ENCODE measurements at regions of chr3 and their contacts with region 1.

Region 1: GRCh38 chr3:119559441-119559963 is at the start of gene CD80:
- DNase-seq: peak; percentile 54
- H3K4me3 Mint-ChIP-seq: peak within 1 kb of the TSS; percentile 55
- H3K27ac Mint-ChIP-seq: peak within 1 kb of the TSS; percentile 67
- H3K4me1 Mint-ChIP-seq: peaks cover 45% of the 10 kb centered on the region
- H3K27me3 Mint-ChIP-seq: no peaks in the 10 kb centered on the region
- total RNA-seq, gene CD80: 6.8 TPM in 2 replicates

Region 2: DNA sequence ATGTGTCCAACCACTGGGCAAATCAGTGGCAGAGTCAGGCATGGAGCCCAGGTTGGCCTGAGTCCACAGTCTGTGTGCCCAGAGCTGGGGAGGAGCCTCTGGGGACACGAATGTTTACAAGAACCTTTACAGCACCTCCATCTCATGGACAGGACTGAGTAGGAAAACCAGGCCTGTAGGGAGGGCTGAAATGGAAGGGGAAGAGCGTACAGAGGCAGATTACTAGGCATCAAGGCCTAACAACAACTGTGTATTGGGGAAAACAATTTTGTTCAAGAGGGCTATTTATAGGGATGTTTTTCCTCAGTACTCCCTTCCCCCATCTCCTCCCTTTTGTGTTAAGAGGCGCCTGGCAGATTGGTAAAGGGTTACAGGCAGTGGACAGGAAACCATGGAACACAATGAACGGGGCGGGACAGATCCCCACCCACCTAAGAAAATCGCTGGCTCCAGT is 280.4 kb before region 1 on chr3:
- intact Hi-C with region 1: loop called (anchors 5 kb)
- DNase-seq: no peak
- H3K4me3 Mint-ChIP-seq: no peak overlapping the region
- H3K27ac Mint-ChIP-seq: no peak overlapping the region
- H3K4me1 Mint-ChIP-seq: peaks cover 7% of the 10 kb centered on the region
- H3K27me3 Mint-ChIP-seq: peaks cover 1% of the 10 kb centered on the region

Region 3: GRCh38 chr3:119380697-119381096 is 178.8 kb before region 1 on chr3:
- intact Hi-C with region 1: loop called (anchors 5 kb)
- DNase-seq: no peak
- H3K4me3 Mint-ChIP-seq: no peak overlapping the region
- H3K27ac Mint-ChIP-seq: no peak overlapping the region
- H3K4me1 Mint-ChIP-seq: no peaks in the 10 kb centered on the region
- H3K27me3 Mint-ChIP-seq: no peaks in the 10 kb centered on the region

Region 4: DNA sequence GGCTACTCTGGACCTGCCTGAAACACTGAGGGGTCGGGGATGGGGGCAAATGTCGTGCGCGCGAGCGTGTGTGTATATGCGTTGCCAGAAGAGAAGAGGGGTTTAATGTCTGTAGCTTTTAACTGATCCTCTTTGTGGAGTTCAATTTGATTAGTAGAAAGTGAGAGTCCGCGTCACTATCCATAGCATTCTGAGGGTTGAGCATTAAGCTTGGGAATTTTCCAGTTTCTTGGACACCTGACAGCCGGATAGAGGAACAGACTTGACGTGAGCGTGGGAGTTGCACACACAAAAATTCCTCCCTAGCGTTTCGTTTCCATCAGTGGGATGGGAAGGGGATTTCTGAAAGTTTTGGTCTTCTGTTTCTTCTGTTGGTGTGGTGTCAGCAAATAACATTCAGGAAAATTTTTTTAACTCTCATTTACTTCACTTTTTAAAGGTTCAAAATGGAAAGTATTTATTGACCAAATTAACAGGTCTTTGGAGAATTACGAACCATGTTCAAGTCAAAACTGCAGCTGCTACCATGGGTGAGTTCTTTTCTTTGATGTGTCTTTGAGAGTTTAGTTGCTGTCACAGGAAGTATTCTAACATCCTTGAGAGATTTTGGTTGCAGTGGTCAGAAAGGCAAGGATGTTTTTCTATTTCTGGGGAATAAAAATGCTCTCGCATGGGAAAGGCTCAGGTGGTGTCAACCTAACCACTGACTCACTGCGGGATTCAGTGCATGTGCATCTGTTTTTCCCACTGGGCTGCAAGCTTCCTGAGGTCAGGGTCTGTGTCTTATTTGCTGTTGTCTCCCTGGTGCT is 89.9 kb before region 1 on chr3:
- intact Hi-C with region 1: loop called (anchors 2 kb)
- DNase-seq: no peak
- H3K4me3 Mint-ChIP-seq: peak overlapping the region; percentile 92
- H3K27ac Mint-ChIP-seq: peak overlapping the region; percentile 88
- H3K4me1 Mint-ChIP-seq: peaks cover 26% of the 10 kb centered on the region
- H3K27me3 Mint-ChIP-seq: no peaks in the 10 kb centered on the region

Region 5: DNA sequence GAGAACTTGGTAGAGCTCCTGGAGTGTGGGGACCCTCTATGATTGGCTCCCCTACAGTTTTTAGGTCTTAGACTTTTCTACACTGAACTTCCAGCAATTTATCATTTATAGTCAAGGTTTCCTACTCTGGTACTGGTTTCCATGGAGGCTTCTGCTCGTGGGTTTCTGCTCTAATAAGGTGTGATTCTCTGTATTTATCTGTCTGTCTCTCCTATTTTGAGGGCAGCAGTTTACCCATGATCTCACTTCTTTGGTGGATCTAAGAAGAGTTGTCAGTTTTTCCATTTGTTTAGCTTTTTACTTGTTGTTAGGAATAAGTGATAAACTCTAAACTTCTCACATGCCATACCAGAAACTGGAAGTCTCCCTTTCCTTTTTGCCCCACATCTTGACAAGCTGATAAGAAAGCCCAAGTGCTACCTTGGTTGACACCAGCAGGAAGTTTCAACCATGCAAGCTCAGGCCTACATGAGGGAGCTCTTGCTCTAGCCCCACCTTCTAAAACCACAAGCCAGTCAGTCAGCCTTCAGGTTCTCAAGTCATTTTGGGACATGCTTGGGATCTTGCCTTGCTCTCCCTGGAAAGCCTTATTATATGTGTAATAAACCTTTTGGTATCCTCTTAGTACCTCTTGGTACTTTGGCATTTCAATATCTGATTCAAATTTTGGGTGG is 51.2 kb before region 1 on chr3:
- intact Hi-C with region 1: loop called (anchors 2 kb)
- DNase-seq: peak; percentile 22
- H3K4me3 Mint-ChIP-seq: no peak overlapping the region
- H3K27ac Mint-ChIP-seq: peak overlapping the region; percentile 76
- H3K4me1 Mint-ChIP-seq: peaks cover 39% of the 10 kb centered on the region
- H3K27me3 Mint-ChIP-seq: no peaks in the 10 kb centered on the region

Region 6: DNA sequence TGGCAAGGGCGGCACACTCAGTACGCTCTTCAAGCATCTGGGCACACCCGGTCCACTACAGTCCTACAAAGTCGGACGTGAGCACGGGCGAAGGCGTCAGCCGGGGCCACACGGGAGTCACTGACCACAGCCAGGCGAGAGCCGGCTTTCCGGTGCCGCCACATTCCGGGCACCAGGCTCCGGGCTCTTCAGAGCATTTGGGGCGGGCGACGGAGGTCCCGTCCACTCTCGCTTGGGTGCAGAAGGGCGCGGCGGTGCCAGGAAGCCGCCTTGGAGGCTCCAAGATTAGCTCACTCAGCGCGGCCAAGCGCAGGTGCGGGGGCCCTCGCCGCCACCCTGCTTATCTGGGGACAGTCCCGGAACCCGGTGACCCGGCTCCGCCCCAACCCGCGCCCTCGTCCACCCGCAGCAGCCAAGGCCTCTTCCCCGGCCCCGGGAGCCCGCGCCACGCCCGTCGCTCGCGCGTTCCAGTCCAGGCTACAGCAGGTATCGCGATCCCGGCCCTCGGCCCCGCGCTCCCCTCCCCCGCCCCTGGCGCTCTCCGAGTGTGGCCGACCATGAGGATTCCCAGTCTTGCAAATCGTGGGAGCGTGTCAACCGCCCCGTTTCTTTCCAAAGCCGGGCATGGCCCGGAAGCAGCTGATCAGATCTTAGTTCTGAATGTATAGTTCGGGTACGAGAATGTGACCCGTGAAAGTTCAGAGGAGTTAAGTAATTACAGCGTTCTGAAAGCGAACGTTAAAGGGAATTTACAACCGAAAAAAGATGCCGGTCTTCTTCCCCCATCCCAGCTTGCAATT is 20.1 kb after region 1 on chr3 and contains the start of gene ADPRH:
- intact Hi-C with region 1: loop called (anchors 2 kb)
- DNase-seq: peak; percentile 44
- H3K4me3 Mint-ChIP-seq: peak within 1 kb of the TSS; percentile 84
- H3K27ac Mint-ChIP-seq: peak within 1 kb of the TSS; percentile 85
- H3K4me1 Mint-ChIP-seq: peaks cover 25% of the 10 kb centered on the region
- H3K27me3 Mint-ChIP-seq: no peaks in the 10 kb centered on the region
- total RNA-seq, gene ADPRH: 5.5 and 6.3 TPM in 2 replicates